ENCODE measurements at regions of chr1 and their contacts with region 1.

Region 1: DNA sequence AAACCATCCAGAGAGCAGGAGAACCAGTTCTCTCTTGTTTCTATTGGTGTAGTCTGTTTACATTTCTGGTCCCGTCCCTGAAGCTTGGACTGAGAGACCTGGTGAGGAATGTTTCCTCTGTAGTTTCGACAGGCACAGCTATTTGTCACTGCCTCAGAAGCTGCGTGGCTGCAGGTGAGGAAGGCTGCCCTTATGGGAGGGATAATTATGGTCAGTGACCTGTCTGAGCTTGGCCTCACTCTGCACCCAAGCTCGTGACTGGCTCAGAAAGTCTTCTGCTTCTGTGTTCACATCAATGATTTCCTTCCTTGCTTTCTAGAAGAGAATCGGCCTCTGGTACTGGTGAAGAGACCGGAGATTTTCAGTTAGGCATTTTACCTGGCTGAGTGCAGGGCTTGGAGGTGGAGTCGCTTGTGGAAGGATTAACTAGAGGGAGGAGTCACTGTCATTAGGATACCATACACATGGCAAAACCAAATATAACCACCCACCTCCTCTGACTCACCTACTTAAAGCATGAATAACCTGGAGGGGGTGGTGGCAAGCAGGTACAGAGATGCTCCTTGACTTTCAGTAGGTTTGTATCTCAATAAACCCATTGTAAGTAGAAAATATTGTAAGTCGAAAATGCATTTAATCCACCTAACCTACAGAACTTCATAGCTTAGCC is 19.9 kb upstream of the WDR26 start:
- DNase-seq: peak; percentile 41 to 64
- H3K4me3 ChIP-seq: no peak overlapping the region
- H3K27ac ChIP-seq: peak overlapping the region; percentile 69 to 95 (median 91)
- H3K4me1 ChIP-seq: peaks cover 26 to 38% of the 10 kb centered on the region in 2 donors
- H3K27me3 ChIP-seq: no peaks in the 10 kb centered on the region
- CTCF ChIP-seq: no peak
- POLR2A ChIP-seq: peak in 1 of 2 donors; percentile 77

Region 2: GRCh38 chr1:224113918-224114786 is 340.4 kb before region 1 on chr1 and contains the start of gene FBXO28:
- intact Hi-C with region 1: loop called (anchors 10 kb)
- DNase-seq: peak; percentile 96 to 98
- H3K4me3 ChIP-seq: peak within 1 kb of the TSS; percentile 41 to 94 (median 90)
- H3K27ac ChIP-seq: peak within 1 kb of the TSS; percentile 78 to 93 (median 91)
- H3K4me1 ChIP-seq: peaks cover 15 to 21% of the 10 kb centered on the region in 2 donors
- H3K27me3 ChIP-seq: no peaks in the 10 kb centered on the region
- CTCF ChIP-seq: no peak
- POLR2A ChIP-seq: peak; percentile 32 to 94
- total RNA-seq, gene FBXO28: 32.5 to 64.7 (median 35.4) TPM

Region 3: GRCh38 chr1:224356685-224357625 is 97.6 kb before region 1 on chr1 and contains the start of gene CNIH4:
- intact Hi-C with region 1: loop called (anchors 10 kb)
- DNase-seq: peak; percentile 89
- H3K4me3 ChIP-seq: peak within 1 kb of the TSS; percentile 43 to 97 (median 74)
- H3K27ac ChIP-seq: peak within 1 kb of the TSS; percentile 42 to 85 (median 62)
- H3K4me1 ChIP-seq: peaks cover 7 to 9% of the 10 kb centered on the region in 2 donors
- H3K27me3 ChIP-seq: no peaks in the 10 kb centered on the region
- CTCF ChIP-seq: peak in 1 of 6 experiments; percentile 11
- POLR2A ChIP-seq: peak in 1 of 2 donors; percentile 88
- total RNA-seq, gene CNIH4: 22.4 to 32.4 (median 23.5) TPM